Tibial artery (tissue), 4 donors: ENCODE measurements at regions of chr7 and their contacts with region 1.

Region 1: DNA sequence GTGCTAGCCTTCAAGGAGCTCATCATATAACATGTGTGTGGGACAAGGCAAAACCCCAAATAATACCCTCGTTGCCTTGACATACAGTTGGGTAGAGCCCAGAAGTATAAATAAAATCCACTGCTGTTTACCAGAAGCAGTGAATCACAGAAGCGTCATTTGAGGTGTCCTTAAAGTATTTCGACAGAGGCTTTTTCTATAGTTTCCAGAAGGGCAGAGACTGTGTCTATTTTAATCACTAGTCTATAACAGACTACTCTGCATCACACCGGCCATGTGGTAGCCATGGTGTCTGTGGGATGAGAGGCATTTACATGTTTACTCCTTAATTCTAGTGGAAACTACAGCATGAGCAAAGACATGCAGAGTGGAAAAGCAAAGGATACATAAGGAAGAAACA is 131.3 kb downstream of the CTTNBP2 start:
- DNase-seq: no peak
- H3K4me3 ChIP-seq: no peak overlapping the region
- H3K27ac ChIP-seq: no peak overlapping the region
- H3K4me1 ChIP-seq: no peaks in the 10 kb centered on the region
- H3K27me3 ChIP-seq: no peaks in the 10 kb centered on the region
- CTCF ChIP-seq: no peak

Region 2: DNA sequence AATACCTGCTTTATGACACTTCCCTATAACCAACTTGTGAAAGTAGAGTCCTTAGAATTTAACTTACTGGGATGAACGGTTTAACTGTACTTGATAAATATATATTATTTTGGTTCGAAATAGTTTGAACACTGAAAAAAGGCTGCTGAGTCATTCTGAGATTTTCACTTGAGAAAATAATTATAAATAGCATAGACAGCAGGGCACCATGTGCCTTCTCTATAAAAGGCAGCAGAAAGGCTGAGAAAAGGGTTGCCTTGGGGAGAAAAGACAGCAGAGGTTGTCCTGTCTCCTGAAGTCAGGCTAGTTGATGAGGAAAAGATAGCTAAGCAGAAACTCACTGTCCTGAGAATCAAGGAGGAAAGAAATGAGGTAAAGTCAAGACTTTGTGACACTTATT is 38.9 kb after region 1 on chr7:
- intact Hi-C with region 1: no loop called
- DNase-seq: no peak
- H3K4me3 ChIP-seq: no peak overlapping the region
- H3K27ac ChIP-seq: peak overlapping the region; percentile 60 to 68
- H3K4me1 ChIP-seq: peaks cover 0 to 44% (median 4%) of the 10 kb centered on the region in 4 donors
- H3K27me3 ChIP-seq: no peaks in the 10 kb centered on the region
- CTCF ChIP-seq: no peak

Region 3: DNA sequence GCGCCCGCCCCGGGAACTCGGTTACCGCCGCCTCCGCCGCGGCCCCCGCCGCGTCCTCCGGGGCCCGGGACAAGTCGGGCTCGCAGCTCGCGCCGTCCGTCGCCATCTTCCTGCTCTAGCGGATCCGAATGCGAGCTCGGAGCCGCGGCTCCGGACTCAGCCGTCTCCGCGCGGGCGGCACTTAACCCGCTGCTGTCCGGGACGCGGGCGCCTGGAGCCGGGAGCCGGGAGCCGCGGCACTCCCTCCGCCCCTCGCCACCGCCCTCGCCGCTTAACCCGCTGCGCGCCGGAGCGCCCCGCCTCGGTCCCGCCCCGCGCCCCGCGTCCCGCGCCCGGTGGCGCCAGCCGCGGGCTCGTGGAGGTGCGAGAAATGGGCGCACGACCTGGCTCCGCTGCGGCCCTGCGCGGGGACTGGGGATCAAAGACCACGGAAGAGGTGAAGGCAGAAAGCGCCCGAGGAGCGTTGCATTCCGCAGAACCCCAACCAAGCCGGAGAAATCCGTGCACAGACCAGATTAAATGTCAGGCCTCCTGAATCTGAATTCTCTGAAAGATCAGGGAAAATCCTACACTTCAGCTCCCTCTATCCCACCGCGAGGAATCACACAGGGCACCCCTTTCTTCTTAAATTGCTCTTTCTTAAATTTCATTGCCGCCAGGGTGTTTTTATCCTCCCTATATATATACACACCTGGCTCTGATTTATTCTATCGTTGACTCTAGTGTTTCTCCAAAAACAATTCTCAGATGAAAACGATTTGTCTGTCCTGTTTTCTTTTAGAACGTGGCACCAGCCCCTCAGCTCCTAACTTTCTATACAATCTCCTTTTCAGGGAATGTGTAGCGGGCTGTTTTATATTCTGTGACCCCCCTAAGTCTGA is 131.6 kb after region 1 on chr7 and contains the start of gene CTTNBP2:
- intact Hi-C with region 1: loop called (anchors 10 kb)
- DNase-seq: peak in 1 of 2 donors; percentile 42
- H3K4me3 ChIP-seq: peak within 1 kb of the TSS; percentile 84 to 96
- H3K27ac ChIP-seq: peak within 1 kb of the TSS; percentile 73 to 80
- H3K4me1 ChIP-seq: peaks cover 0 to 19% (median 2%) of the 10 kb centered on the region in 4 donors
- H3K27me3 ChIP-seq: no peaks in the 10 kb centered on the region
- CTCF ChIP-seq: no peak

Region 4: GRCh38 chr7:118175740-118176139 is 433.8 kb after region 1 on chr7:
- intact Hi-C with region 1: loop called (anchors 10 kb)
- DNase-seq: no peak
- H3K4me3 ChIP-seq: no peak overlapping the region
- H3K27ac ChIP-seq: no peak overlapping the region
- H3K4me1 ChIP-seq: no peaks in the 10 kb centered on the region
- H3K27me3 ChIP-seq: no peaks in the 10 kb centered on the region
- CTCF ChIP-seq: no peak